ENCODE measurements at regions of chr3 and their contacts with region 1.

Region 1: DNA sequence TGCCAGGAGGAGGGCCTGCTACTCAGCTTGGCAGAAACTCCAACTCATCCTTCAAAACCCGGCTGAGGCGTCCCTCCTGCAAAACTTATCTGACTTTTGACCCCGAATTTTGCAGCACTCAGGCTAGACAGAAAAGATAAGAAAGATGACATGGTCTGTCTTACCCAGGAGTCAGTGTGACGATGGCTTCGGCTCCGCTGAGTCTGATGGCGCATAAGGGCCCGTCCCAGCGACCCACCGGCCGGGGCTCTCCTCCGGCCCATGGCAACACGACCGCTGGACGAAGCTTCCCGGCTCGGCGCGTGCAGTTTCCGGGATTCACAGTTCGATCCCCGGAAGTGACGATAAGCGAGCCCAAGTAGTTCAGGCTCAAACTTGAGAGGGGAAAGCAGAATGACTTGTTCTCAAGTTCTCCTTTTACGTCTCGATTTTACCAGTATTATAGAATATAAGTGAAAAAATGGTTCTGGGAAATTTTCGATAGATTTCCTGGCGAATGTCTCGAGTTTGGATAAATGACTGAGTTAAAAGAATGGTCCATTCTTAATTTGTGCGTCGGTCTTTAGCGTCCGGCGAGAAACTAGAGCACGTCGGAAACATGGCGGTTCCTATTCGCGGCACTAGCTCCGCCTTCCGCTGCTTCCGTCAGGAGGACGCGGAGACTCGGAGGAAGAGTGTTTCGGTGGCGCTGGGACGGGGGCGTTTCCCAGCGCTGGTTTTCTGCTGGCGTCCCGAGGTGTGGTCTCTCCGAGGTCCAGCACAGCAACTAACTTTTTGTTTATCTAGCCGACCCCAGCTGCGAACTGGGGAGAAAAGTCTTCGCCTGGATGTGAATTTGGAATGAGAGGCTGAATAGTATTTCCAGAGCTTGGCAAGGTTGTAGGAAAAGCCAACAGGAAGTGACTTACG is at the start of gene LSG1:
- DNase-seq: peak; percentile 80
- ATAC-seq: peak; percentile 94
- H3K4me3 Mint-ChIP-seq: peak within 1 kb of the TSS; percentile 99
- H3K27ac Mint-ChIP-seq: peak within 1 kb of the TSS; percentile 99
- H3K4me1 Mint-ChIP-seq: peaks cover 22% of the 10 kb centered on the region
- H3K27me3 Mint-ChIP-seq: peaks cover 6% of the 10 kb centered on the region
- CTCF ChIP-seq: no peak
- total RNA-seq, gene LSG1: 55.1 and 55.4 TPM in 2 replicates

Region 2: DNA sequence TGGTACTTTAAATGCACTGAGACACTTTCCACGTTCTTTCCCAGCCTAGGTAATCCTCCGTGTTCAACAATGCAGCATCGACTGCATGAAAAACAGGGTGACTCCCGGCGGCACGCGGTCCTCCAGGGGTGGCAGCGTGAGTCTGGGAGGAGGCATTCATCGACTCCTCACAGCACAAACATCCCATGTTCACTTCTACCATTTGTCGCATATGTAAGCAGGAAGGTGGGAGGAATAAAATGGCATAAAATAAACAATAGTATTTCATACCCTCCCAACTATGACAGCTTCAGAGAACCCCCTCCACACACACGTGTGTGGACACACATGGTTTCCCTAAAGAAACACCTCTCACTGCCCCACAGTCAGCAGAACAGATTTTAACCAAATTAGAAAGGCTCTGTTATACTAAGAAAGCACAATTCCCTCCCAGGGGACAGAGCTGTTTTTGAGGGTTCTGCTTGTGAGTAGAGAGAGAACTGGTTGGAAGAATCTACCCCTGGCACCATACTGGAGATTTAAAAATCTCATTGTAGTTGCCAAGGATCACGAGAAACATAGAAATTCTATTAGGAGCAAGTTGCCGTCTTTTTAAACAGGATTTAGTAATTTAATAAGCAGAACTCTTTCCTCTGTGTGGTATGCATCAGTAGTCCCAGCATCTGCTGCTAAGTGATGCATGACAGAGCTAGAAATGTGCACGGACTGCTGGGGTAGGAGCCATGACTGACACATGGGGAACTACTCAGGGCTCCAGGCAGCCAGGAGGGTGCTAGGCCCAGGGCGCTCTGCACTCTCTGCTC is 19.5 kb after region 1 on chr3:
- CTCF ChIA-PET with region 1: interaction called, 38 read pairs
- POLR2A ChIA-PET with region 1: interaction called, 127 read pairs
- intact Hi-C with region 1: loop called (anchors 2 kb)
- DNase-seq: peak; percentile 30
- ATAC-seq: peak; percentile 62
- H3K4me3 Mint-ChIP-seq: peak overlapping the region; percentile 73
- H3K27ac Mint-ChIP-seq: peak overlapping the region; percentile 97
- H3K4me1 Mint-ChIP-seq: peaks cover 84% of the 10 kb centered on the region
- H3K27me3 Mint-ChIP-seq: no peaks in the 10 kb centered on the region
- CTCF ChIP-seq: no peak

Region 3: DNA sequence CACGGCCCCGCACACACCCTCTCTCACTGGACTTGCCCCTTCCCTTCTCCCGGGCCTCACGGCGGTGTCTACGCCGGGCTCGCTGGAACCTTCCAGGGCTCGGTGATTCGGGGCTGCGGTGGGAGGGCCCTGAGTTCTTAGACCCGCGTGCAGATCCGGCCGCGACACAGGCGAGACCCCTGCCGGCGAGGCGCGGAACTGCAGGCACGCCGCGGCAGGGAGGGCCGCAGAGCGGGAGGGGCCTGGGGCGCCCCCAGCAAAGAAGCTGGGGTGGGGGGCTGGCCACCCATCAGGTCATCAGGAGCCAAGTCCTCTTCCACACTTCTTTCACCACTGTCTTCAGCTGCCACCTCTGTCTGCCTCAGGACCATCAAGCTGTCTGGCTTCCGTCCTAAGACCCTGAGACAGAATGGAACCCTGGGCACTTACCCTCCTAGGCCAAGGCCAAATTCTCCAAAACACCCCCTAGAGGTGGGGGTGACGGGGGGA is 434.3 kb after region 1 on chr3:
- CTCF ChIA-PET with region 1: interaction called, 37 read pairs
- POLR2A ChIA-PET with region 1: interaction called, 3 read pairs
- intact Hi-C with region 1: loop called (anchors 1 kb)
- DNase-seq: peak; percentile 86
- ATAC-seq: peak; percentile 98
- H3K4me3 Mint-ChIP-seq: peak overlapping the region; percentile 67
- H3K27ac Mint-ChIP-seq: peak overlapping the region; percentile 61
- H3K4me1 Mint-ChIP-seq: peaks cover 35% of the 10 kb centered on the region
- H3K27me3 Mint-ChIP-seq: no peaks in the 10 kb centered on the region
- CTCF ChIP-seq: peak; percentile 94

Region 4: GRCh38 chr3:195271116-195271858 is 599.1 kb after region 1 on chr3 and contains the start of gene XXYLT1:
- CTCF ChIA-PET with region 1: interaction called, 38 read pairs
- POLR2A ChIA-PET with region 1: interaction called, 29 read pairs
- intact Hi-C with region 1: loop called (anchors 1 kb)
- DNase-seq: peak; percentile 84
- ATAC-seq: peak; percentile 87
- H3K4me3 Mint-ChIP-seq: peak within 1 kb of the TSS; percentile 87
- H3K27ac Mint-ChIP-seq: peak within 1 kb of the TSS; percentile 82
- H3K4me1 Mint-ChIP-seq: peaks cover 20% of the 10 kb centered on the region
- H3K27me3 Mint-ChIP-seq: no peaks in the 10 kb centered on the region
- CTCF ChIP-seq: peak; percentile 77
- total RNA-seq, gene XXYLT1: 7.6 and 7.9 TPM in 2 replicates

Region 5: DNA sequence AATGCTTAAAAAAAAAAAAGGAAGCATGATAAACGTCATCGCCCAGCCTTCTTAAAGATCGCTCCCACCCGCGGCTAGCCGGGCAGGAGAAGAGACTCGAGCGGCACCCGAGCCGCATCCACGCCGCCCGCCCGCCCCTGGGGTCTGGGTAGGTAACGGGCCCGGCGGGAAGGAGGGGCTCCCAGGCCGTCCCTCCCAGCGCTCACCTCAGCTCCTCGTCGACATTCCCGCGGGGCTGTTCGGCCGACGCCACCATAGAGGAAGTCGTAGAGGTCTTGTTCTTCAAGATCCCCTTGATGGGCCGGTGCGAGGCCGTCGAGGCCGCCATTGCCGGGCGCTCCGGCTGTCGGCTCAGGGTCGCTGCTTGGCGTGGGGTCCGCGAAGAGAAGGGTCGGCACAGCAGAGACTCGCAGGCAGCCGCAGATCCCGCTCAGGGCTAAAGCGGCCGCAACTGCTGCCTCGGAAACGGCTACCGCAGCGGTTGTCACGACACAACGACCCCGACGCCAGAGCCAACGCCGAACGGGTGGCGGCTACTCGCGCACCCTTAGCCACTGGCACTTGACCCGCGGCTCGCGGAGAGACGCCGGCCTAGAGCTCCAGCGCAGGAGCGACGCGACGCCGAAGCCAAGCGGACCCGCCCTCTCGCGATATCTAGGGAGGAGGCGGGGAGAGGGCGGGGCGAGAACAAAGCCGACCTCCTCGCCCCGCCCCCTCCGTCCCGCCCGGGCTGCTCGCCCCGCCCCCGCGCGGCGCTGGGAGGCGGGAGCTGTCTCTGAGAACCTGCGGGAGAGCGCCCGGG is 870.7 kb after region 1 on chr3 and contains the start of gene PPP1R2:
- CTCF ChIA-PET with region 1: no interaction called
- POLR2A ChIA-PET with region 1: interaction called, 13 read pairs
- intact Hi-C with region 1: loop called (anchors 1 kb)
- DNase-seq: peak; percentile 95
- ATAC-seq: peak; percentile 84
- H3K4me3 Mint-ChIP-seq: peak within 1 kb of the TSS; percentile 91
- H3K27ac Mint-ChIP-seq: peak within 1 kb of the TSS; percentile 92
- H3K4me1 Mint-ChIP-seq: peaks cover 76% of the 10 kb centered on the region
- H3K27me3 Mint-ChIP-seq: no peaks in the 10 kb centered on the region
- CTCF ChIP-seq: no peak
- total RNA-seq, gene PPP1R2: 62.5 and 64.1 TPM in 2 replicates

Measured in activated B cell treated with CpG ODN at 0.5 μM for 24 hours (primary cell).